PC-9 (cell line): ENCODE measurements at regions of chr19 and their contacts with region 1.

Region 1: DNA sequence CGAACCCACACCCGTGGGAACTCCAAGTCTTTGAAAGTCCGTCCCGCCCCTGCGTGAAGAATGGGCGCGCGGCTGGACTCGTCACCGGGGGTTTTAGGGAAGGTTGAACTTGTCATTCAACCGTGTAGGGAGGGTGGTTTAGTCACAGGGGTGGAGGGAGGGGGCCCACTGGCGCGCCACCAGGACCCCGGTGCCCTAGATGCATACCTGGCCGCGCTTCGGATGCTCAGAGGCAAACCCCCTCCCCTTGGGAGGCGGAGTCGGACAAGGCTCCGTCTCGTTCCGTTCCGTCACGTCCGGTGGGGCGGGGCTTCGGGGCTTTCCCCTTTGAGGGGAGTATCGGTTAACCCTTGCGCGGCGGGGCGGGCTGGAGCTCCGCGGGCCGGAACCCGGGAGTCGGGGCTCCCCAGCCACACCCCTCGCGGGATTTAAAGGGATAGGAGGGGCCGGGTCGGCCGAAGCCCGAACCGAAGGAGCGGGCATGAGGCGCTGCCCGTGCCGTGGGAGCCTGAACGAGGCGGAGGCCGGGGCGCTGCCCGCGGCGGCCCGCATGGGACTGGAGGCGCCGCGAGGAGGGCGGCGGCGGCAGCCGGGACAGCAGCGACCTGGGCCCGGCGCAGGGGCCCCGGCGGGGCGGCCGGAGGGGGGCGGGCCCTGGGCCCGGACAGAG is at the starts of genes COQ8B and ITPKC:
- DNase-seq: peak; percentile 94 to 99
- H3K4me3 ChIP-seq: peak within 1 kb of the TSS; percentile 75
- H3K27ac ChIP-seq: peak within 1 kb of the TSS; percentile 99
- H3K4me1 ChIP-seq: peaks cover 27% of the 10 kb centered on the region
- H3K27me3 ChIP-seq: no peaks in the 10 kb centered on the region
- CTCF ChIP-seq: no peak
- total RNA-seq, gene COQ8B: 57.7 and 66.6 TPM in 2 replicates
- total RNA-seq, gene ITPKC: 17.6 and 22.1 TPM in 2 replicates

Region 2: GRCh38 chr19:40523322-40524047 is 193.3 kb before region 1 on chr19:
- CTCF ChIA-PET with region 1: no interaction called
- POLR2A ChIA-PET with region 1: no interaction called
- intact Hi-C with region 1: no loop called
- DNase-seq: peak; percentile 61 to 75
- H3K4me3 ChIP-seq: no peak overlapping the region
- H3K27ac ChIP-seq: no peak overlapping the region
- H3K4me1 ChIP-seq: no peaks in the 10 kb centered on the region
- H3K27me3 ChIP-seq: peaks cover 4% of the 10 kb centered on the region; the same call in 1 of the 2 replicates
- CTCF ChIP-seq: peak; percentile 70

Region 3: GRCh38 chr19:40609561-40610395 is 107.0 kb before region 1 on chr19:
- CTCF ChIA-PET with region 1: no interaction called
- POLR2A ChIA-PET with region 1: no interaction called
- intact Hi-C with region 1: loop called (anchors 5 kb)
- DNase-seq: peak; percentile 77 to 95
- H3K4me3 ChIP-seq: peak overlapping the region; percentile 63
- H3K27ac ChIP-seq: no peak overlapping the region
- H3K4me1 ChIP-seq: peaks cover 18% of the 10 kb centered on the region
- H3K27me3 ChIP-seq: no peaks in the 10 kb centered on the region
- CTCF ChIP-seq: no peak

Region 4: GRCh38 chr19:40690693-40691420 is 25.9 kb before region 1 on chr19:
- CTCF ChIA-PET with region 1: no interaction called
- POLR2A ChIA-PET with region 1: no interaction called
- intact Hi-C with region 1: loop called (anchors 1 kb)
- DNase-seq: peak; percentile 77 to 90
- H3K4me3 ChIP-seq: peak overlapping the region; percentile 75
- H3K27ac ChIP-seq: peak overlapping the region; percentile 81
- H3K4me1 ChIP-seq: peaks cover 19% of the 10 kb centered on the region
- H3K27me3 ChIP-seq: no peaks in the 10 kb centered on the region
- CTCF ChIP-seq: no peak

Region 5: GRCh38 chr19:40735003-40735771 is 18.4 kb after region 1 on chr19:
- CTCF ChIA-PET with region 1: no interaction called
- POLR2A ChIA-PET with region 1: interaction called, 10 read pairs
- intact Hi-C with region 1: loop called (anchors 1 kb)
- DNase-seq: peak in 1 of 2 experiments; percentile 37
- H3K4me3 ChIP-seq: no peak overlapping the region
- H3K27ac ChIP-seq: peak overlapping the region; percentile 65
- H3K4me1 ChIP-seq: peaks cover 15% of the 10 kb centered on the region
- H3K27me3 ChIP-seq: no peaks in the 10 kb centered on the region
- CTCF ChIP-seq: no peak

Region 6: DNA sequence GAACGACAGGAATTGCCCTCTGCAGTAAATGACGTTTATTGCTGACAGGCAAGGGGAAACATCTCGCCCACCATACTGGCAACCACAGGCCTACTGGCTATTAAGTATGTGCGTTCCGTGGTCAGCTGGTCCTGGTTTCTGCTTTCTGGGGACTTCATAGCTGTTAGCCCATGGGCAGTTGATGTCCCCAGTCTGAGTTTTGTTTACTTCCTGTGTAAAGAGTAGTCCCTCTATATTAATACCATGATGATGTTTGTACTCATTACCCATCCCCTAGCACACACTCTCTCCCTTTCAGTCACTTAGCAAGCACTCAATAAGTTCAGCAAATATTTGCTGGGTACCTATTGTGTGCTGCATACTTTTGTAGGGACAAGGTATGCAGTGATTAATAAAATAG is 52.1 kb after region 1 on chr19:
- CTCF ChIA-PET with region 1: no interaction called
- POLR2A ChIA-PET with region 1: no interaction called
- intact Hi-C with region 1: no loop called
- DNase-seq: no peak
- H3K4me3 ChIP-seq: no peak overlapping the region
- H3K27ac ChIP-seq: no peak overlapping the region
- H3K4me1 ChIP-seq: no peaks in the 10 kb centered on the region
- H3K27me3 ChIP-seq: no peaks in the 10 kb centered on the region
- CTCF ChIP-seq: no peak

Region 7: GRCh38 chr19:40798223-40798996 is 81.6 kb after region 1 on chr19:
- CTCF ChIA-PET with region 1: interaction called, 3 read pairs
- POLR2A ChIA-PET with region 1: no interaction called
- intact Hi-C with region 1: loop called (anchors 1 kb)
- DNase-seq: peak; percentile 95 to 100
- H3K4me3 ChIP-seq: peak overlapping the region; percentile 52
- H3K27ac ChIP-seq: peak overlapping the region; percentile 11; the same call in 1 of the 2 replicates
- H3K4me1 ChIP-seq: peaks cover 28% of the 10 kb centered on the region
- H3K27me3 ChIP-seq: no peaks in the 10 kb centered on the region
- CTCF ChIP-seq: peak; percentile 60; the same call in 1 of the 2 replicates

Region 8: GRCh38 chr19:41013359-41013758 is 296.6 kb after region 1 on chr19:
- CTCF ChIA-PET with region 1: no interaction called
- POLR2A ChIA-PET with region 1: no interaction called
- intact Hi-C with region 1: no loop called
- DNase-seq: no peak
- H3K4me3 ChIP-seq: no peak overlapping the region
- H3K27ac ChIP-seq: no peak overlapping the region
- H3K4me1 ChIP-seq: no peaks in the 10 kb centered on the region
- H3K27me3 ChIP-seq: peaks cover 29% of the 10 kb centered on the region
- CTCF ChIP-seq: no peak

Region 9: GRCh38 chr19:41226053-41226873 is 509.5 kb after region 1 on chr19:
- CTCF ChIA-PET with region 1: no interaction called
- POLR2A ChIA-PET with region 1: no interaction called
- intact Hi-C with region 1: loop called (anchors 5 kb)
- DNase-seq: peak; percentile 75 to 97
- H3K4me3 ChIP-seq: peak overlapping the region; percentile 61
- H3K27ac ChIP-seq: peak overlapping the region; percentile 78
- H3K4me1 ChIP-seq: peaks cover 52% of the 10 kb centered on the region
- H3K27me3 ChIP-seq: no peaks in the 10 kb centered on the region
- CTCF ChIP-seq: no peak